ENCODE measurements at regions of chr13 and their contacts with region 1.

Region 1: GRCh38 chr13:50529154-50529882 is 314.2 kb downstream of the DLEU7 start:
- DNase-seq: peak; percentile 92
- H3K4me3 Mint-ChIP-seq: peak overlapping the region; percentile 68
- H3K27ac Mint-ChIP-seq: peak overlapping the region; percentile 98
- H3K4me1 Mint-ChIP-seq: peaks cover 37% of the 10 kb centered on the region
- H3K27me3 Mint-ChIP-seq: no peaks in the 10 kb centered on the region
- CTCF ChIP-seq: no peak

Region 2: DNA sequence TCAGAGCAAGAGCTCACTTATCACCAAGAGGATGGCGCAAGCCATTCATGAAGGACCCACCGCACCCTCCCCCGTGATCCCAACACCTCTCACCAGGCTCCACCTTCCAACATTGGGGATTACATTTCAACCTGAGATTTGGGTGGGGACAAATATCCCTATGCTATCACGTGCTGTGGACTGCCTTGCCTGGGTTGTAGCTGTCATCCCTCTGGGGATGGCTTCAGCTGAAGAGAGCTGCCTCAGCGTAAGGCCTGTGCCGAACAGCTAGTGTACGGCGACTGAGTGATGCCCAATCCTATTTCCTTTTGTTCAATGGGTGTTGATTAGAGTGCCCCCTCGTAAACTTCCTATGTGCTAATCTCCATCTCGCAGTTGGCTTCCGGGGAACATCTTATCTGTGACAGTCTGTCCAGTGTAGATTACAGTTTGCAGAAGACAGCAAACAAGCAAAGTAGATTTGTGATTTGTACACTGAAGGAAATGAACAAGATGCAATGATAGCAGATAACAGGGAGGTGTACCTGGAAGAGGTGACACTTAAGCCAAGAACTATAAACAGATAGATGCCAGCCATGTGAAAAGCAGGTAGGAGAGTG is 932.2 kb before region 1 on chr13:
- CTCF ChIA-PET with region 1: no interaction called
- POLR2A ChIA-PET with region 1: no interaction called
- intact Hi-C with region 1: no loop called
- DNase-seq: no peak
- H3K4me3 Mint-ChIP-seq: no peak overlapping the region
- H3K27ac Mint-ChIP-seq: no peak overlapping the region
- H3K4me1 Mint-ChIP-seq: no peaks in the 10 kb centered on the region
- H3K27me3 Mint-ChIP-seq: no peaks in the 10 kb centered on the region
- CTCF ChIP-seq: no peak

Region 3: GRCh38 chr13:49976314-49977258 is 552.7 kb before region 1 on chr13:
- CTCF ChIA-PET with region 1: interaction called, 4 read pairs
- POLR2A ChIA-PET with region 1: no interaction called
- intact Hi-C with region 1: loop called (anchors 2 kb)
- DNase-seq: peak; percentile 85
- H3K4me3 Mint-ChIP-seq: no peak overlapping the region
- H3K27ac Mint-ChIP-seq: peak overlapping the region; percentile 21
- H3K4me1 Mint-ChIP-seq: peaks cover 11% of the 10 kb centered on the region
- H3K27me3 Mint-ChIP-seq: no peaks in the 10 kb centered on the region
- CTCF ChIP-seq: peak; percentile 88

Region 4: DNA sequence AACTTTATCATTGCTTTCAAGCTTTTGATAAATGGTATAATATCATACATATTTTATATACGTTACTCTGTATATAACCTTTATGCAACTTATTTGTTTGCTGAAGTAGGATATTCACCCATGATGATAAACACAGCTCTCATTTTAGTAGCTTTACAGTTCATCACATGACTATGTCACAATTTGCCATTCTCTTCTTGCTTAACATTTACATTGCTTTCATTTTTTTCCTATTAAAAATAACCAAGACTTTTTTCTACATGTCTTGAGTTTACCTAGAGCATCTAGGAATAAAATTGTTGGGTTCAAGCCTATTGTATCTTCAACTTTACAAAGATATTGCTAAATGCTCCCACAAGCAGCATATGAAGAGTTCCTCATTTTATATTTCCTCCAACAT is 460.1 kb before region 1 on chr13:
- CTCF ChIA-PET with region 1: interaction called, 3 read pairs
- POLR2A ChIA-PET with region 1: interaction called, 27 read pairs
- intact Hi-C with region 1: no loop called
- DNase-seq: peak; percentile 42
- H3K4me3 Mint-ChIP-seq: peak overlapping the region; percentile 33
- H3K27ac Mint-ChIP-seq: peak overlapping the region; percentile 81
- H3K4me1 Mint-ChIP-seq: peaks cover 31% of the 10 kb centered on the region
- H3K27me3 Mint-ChIP-seq: no peaks in the 10 kb centered on the region
- CTCF ChIP-seq: no peak

Region 5: GRCh38 chr13:50123862-50124536 is 405.3 kb before region 1 on chr13:
- CTCF ChIA-PET with region 1: no interaction called
- POLR2A ChIA-PET with region 1: interaction called, 97 read pairs
- intact Hi-C with region 1: loop called (anchors 2 kb)
- DNase-seq: peak; percentile 92
- H3K4me3 Mint-ChIP-seq: peak overlapping the region; percentile 87
- H3K27ac Mint-ChIP-seq: peak overlapping the region; percentile 94
- H3K4me1 Mint-ChIP-seq: peaks cover 28% of the 10 kb centered on the region
- H3K27me3 Mint-ChIP-seq: no peaks in the 10 kb centered on the region
- CTCF ChIP-seq: no peak

Region 6: DNA sequence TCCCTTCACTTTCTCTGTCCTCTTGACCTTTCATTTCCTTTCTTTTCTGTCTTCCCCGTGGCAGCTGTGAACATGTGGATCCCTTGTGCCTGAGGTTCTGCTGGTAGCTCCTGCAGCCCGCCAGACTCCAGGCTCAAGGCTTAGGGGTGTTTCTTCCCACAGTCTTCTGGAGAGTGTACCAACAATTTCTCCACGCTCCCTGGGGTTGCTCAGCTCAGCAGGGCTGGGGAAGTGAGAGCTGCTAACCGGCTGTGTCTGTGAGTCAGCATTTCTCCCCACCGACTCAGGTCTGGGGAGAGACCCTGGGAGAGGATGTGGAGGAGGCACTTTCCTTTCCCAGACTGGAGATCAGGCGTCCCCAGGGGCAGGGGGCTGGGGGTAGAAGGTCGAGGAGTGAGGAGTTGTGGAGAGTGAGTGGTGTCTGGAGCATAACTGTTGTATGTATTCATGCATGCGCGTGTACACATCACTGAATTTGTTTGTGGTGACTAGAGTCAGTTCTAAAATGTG is 320.4 kb before region 1 on chr13:
- CTCF ChIA-PET with region 1: no interaction called
- POLR2A ChIA-PET with region 1: interaction called, 13 read pairs
- intact Hi-C with region 1: no loop called
- DNase-seq: peak; percentile 57
- H3K4me3 Mint-ChIP-seq: peak overlapping the region; percentile 70
- H3K27ac Mint-ChIP-seq: peak overlapping the region; percentile 91
- H3K4me1 Mint-ChIP-seq: peaks cover 16% of the 10 kb centered on the region
- H3K27me3 Mint-ChIP-seq: no peaks in the 10 kb centered on the region
- CTCF ChIP-seq: no peak

Region 7: GRCh38 chr13:50401049-50401505 is 128.2 kb before region 1 on chr13:
- CTCF ChIA-PET with region 1: interaction called, 3 read pairs
- POLR2A ChIA-PET with region 1: interaction called, 29 read pairs
- intact Hi-C with region 1: no loop called
- DNase-seq: peak; percentile 75
- H3K4me3 Mint-ChIP-seq: no peak overlapping the region
- H3K27ac Mint-ChIP-seq: peak overlapping the region; percentile 15
- H3K4me1 Mint-ChIP-seq: peaks cover 30% of the 10 kb centered on the region
- H3K27me3 Mint-ChIP-seq: no peaks in the 10 kb centered on the region
- CTCF ChIP-seq: no peak

Region 8: GRCh38 chr13:50911937-50912795 is 382.8 kb after region 1 on chr13:
- CTCF ChIA-PET with region 1: interaction called, 6 read pairs
- POLR2A ChIA-PET with region 1: interaction called, 6 read pairs
- intact Hi-C with region 1: loop called (anchors 2 kb)
- DNase-seq: peak; percentile 90
- H3K4me3 Mint-ChIP-seq: peak overlapping the region; percentile 30
- H3K27ac Mint-ChIP-seq: no peak overlapping the region
- H3K4me1 Mint-ChIP-seq: peaks cover 16% of the 10 kb centered on the region
- H3K27me3 Mint-ChIP-seq: no peaks in the 10 kb centered on the region
- CTCF ChIP-seq: peak; percentile 90

Region 9: DNA sequence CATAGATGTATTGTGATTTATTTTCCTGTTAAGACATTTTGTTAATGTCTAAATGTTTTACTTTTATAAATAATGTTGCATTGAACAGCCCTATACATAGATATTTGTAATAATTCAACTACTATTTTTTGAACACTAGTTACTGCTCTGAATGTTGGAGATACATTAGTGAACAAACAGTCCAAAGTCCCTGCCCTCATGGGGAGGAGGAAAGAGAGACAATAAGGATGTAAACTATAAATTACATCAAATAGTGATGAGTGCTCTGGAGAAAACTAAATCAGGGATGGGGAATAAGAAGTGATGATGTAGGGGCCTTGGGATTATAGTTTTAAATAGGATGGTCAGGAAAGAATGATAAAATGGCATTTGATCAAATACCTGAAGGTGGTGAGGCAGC is 935.8 kb after region 1 on chr13:
- CTCF ChIA-PET with region 1: no interaction called
- POLR2A ChIA-PET with region 1: no interaction called
- intact Hi-C with region 1: no loop called
- DNase-seq: no peak
- H3K4me3 Mint-ChIP-seq: no peak overlapping the region
- H3K27ac Mint-ChIP-seq: no peak overlapping the region
- H3K4me1 Mint-ChIP-seq: no peaks in the 10 kb centered on the region
- H3K27me3 Mint-ChIP-seq: no peaks in the 10 kb centered on the region
- CTCF ChIP-seq: no peak